ENCODE measurements at regions of chr12 and their contacts with region 1.

Region 1: DNA sequence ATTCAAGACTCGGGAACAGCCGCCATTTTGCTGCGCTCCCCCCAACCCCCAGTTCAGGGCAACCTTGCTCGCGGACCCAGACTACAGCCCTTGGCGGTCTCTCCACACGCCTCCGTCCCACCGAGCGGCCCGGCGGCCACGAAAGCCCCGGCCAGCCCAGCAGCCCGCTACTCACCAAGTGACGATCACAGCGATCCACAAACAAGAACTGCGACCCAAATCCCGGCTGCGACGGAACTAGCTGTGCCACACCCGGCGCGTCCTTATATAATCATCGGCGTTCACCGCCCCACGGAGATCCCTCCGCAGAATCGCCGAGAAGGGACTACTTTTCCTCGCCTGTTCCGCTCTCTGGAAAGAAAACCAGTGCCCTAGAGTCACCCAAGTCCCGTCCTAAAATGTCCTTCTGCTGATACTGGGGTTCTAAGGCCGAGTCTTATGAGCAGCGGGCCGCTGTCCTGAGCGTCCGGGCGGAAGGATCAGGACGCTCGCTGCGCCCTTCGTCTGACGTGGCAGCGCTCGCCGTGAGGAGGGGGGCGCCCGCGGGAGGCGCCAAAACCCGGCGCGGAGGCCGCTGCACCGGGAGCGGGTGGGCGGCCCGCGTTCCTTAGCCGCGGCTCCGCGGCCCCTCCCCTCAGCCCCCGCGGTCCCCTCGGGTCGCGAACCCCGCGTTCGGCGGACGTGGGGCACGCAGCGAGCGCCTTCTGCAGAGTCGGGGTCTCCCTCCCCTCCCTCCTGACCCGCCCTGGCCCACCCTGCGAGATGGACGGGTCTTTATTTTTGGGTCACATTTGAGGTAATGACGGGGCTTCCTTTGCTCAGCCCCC is at the start of gene UBC:
- DNase-seq: peak; percentile 92
- H3K4me3 ChIP-seq: peak within 1 kb of the TSS; percentile 75 to 97
- H3K27ac ChIP-seq: peak within 1 kb of the TSS; percentile 99 to 100
- H3K4me1 ChIP-seq: peaks cover 12% of the 10 kb centered on the region
- H3K27me3 ChIP-seq: no peaks in the 10 kb centered on the region
- CTCF ChIP-seq: peak in 1 of 4 experiments; percentile 15
- POLR2A ChIP-seq: peak; percentile 99
- total RNA-seq, gene UBC: 854 to 1,154 TPM

Region 2: DNA sequence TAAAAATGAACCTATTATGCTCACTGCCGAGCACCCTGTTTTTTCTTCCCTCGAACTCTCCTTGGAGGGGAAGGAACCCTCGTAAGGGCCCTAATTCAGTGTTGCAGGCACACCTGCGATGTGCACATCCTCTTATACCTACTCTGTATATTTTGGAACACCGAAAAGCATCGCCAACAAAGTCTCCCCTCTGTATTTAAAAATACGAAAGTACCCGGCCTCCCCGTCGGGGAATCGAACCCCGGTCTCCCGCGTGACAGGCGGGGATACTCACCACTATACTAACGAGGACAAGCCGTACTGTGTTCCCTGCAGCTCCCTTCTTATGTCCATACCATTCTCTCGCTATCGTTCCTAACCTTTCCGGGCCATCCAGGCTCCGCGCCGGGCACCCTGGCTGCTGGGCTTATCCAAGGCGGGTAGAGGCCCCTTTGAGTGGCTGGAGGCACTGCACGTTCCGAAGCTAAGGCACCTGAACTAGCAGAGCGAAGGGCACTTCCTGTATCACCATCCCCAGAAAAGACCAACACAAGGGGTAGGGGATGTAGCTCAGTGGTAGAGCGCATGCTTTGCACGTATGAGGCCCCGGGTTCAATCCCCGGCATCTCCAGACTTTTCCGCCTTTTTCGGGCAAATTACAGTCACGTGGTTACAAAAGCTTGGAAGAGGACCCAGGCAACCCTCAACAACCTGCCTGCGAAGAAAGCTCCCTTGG is 25.0 kb after region 1 on chr12:
- intact Hi-C with region 1: loop called (anchors 2 kb)
- DNase-seq: peak; percentile 77
- H3K4me3 ChIP-seq: peak overlapping the region; percentile 32 to 36
- H3K27ac ChIP-seq: peak overlapping the region; percentile 93 to 95
- H3K4me1 ChIP-seq: no peaks in the 10 kb centered on the region
- H3K27me3 ChIP-seq: no peaks in the 10 kb centered on the region
- CTCF ChIP-seq: no peak
- POLR2A ChIP-seq: no peak

Measured in prostate gland (tissue), 2 donors.